Prostate gland (tissue), 2 donors: ENCODE measurements at regions of chrX and their contacts with region 1.

Region 1: GRCh38 chrX:104565791-104566680 is at the start of gene IL1RAPL2:
- DNase-seq: peak; percentile 12
- H3K4me3 ChIP-seq: no peak within 1 kb of the TSS
- H3K27ac ChIP-seq: no peak within 1 kb of the TSS
- H3K4me1 ChIP-seq: no peaks in the 10 kb centered on the region
- H3K27me3 ChIP-seq: no peaks in the 10 kb centered on the region
- CTCF ChIP-seq: peak in 3 of 4 experiments; percentile 18 to 32 (median 20)
- POLR2A ChIP-seq: no peak
- total RNA-seq, gene IL1RAPL2: 0.51 TPM in 1 of 2 donors, not detected in the other

Region 2: GRCh38 chrX:104922206-104922621 is 356.2 kb after region 1 on chrX:
- intact Hi-C with region 1: loop called (anchors 10 kb)
- DNase-seq: peak; percentile 39
- H3K4me3 ChIP-seq: no peak overlapping the region
- H3K27ac ChIP-seq: no peak overlapping the region
- H3K4me1 ChIP-seq: no peaks in the 10 kb centered on the region
- H3K27me3 ChIP-seq: no peaks in the 10 kb centered on the region
- CTCF ChIP-seq: peak; percentile 69 to 84 (median 78)
- POLR2A ChIP-seq: no peak